ENCODE measurements at regions of chr7 and their contacts with region 1.

Region 1: DNA sequence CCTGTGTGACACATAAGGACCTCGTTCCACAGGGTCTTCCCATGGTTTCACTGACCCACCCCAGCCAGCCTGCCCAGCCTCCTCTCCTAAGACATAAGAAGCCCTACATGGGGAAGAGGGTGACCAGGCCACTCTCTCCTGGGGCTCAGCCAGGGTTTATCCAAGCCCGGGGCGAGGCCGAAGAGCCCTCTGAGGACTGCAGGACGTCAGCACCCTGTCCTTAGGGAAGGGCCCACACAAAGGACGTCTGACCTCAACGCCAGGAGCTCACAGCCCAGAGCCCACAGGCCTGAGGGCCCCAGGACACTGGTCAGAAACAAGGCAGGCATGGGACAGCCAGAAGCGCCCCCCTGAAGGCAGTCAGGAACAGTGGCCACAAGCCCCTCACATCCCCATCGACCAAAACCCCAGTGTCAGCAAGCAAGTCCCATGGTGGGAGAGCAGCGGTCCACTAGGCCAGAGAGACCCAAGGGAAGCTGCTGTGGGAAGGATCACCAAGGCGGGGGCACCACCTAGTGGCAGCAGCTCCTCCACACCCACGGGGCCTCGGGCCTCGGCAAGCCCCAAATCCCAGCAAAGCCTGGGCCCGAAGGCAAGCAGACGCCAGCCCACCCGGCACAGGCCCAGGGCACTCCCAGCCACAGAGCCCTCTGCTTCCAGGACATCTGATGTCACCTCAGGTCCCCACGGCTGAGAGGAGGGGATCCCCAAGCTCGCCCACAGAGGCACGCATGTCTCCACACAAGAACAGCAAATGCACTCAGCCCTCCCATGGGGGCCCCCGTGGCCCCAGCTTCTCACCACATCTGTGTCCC is 23.4 kb downstream of the MAD1L1 start:
- DNase-seq: peak; percentile 95
- H3K4me3 ChIP-seq: no peak overlapping the region
- H3K27ac ChIP-seq: peak overlapping the region in 1 of 2 experiments; percentile 2; a peak in 1 of 4 replicates
- H3K4me1 ChIP-seq: peaks cover 0 to 20% of the 10 kb centered on the region in 2 experiments; a peak in 2 of 4 replicates
- H3K27me3 ChIP-seq: no peaks in the 10 kb centered on the region
- CTCF ChIP-seq: peak; percentile 90
- EP300 ChIP-seq: no peak
- RAD21 ChIP-seq: peak; percentile 95

Region 2: DNA sequence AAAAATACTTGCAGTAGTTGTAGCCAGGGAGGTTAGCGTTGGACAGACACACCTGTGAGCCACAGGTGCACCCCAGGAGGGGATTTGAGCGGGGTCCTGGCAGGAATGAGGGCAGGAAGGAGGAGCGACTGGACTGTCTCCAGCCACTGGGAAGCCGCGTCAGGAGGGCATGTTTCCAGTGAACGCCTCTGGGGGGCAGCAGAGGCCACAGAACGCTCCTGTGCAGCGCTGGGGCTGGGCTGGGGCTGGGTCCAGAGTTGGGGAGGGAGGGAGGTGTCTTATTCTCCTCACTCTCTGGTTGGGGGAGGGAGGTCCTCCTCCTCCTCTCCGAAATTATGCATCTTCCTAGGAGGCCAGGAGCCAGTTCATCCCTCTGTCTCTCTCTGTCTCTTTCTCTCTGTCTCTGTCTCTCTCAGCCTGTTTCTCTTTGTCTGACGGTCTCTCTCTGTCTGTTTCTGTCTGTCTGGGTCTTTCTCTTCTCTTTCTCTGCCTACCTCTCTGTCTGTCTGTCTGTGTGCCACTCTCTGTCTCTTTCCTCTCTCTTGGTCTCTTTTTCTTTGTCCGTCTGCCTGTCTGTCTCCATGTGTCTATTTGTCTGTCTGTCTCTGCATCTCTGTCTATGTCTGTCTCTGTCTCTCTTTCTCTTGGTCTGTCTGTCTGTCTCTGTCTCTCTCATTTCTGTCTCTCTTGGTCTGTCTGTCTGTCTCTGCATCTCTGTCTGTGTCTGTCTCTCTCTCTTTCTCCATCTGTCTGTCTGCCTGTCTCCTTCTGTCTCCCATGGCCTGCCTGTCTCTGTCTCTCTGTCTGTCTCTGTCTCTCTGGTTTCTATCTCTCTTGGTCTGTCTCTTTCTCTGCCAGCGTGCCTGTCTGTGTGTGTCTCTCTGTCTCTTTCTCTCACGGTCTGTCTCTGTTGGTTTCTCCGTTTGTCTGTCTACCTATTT is 629.6 kb before region 1 on chr7:
- CTCF ChIA-PET with region 1: interaction called, 12 read pairs
- POLR2A ChIA-PET with region 1: no interaction called
- DNase-seq: peak; percentile 93
- H3K4me3 ChIP-seq: no peak overlapping the region
- H3K27ac ChIP-seq: peak overlapping the region in 1 of 2 experiments; percentile 31; a peak in 1 of 4 replicates
- H3K4me1 ChIP-seq: peaks cover 0 to 12% of the 10 kb centered on the region in 2 experiments; a peak in 1 of 4 replicates
- H3K27me3 ChIP-seq: no peaks in the 10 kb centered on the region
- CTCF ChIP-seq: peak; percentile 95
- EP300 ChIP-seq: no peak
- RAD21 ChIP-seq: peak; percentile 98

Region 3: GRCh38 chr7:1587125-1587592 is 622.2 kb before region 1 on chr7:
- CTCF ChIA-PET with region 1: interaction called, 10 read pairs
- POLR2A ChIA-PET with region 1: no interaction called
- DNase-seq: peak; percentile 97
- H3K4me3 ChIP-seq: no peak overlapping the region; a peak in 1 of 4 replicates
- H3K27ac ChIP-seq: peak overlapping the region in 1 of 2 experiments; percentile 95; a peak in 2 of 4 replicates
- H3K4me1 ChIP-seq: peaks cover 0 to 57% of the 10 kb centered on the region in 2 experiments; a peak in 1 of 4 replicates
- H3K27me3 ChIP-seq: peaks cover 18% of the 10 kb centered on the region; the same call in 1 of the 2 replicates
- CTCF ChIP-seq: no peak
- EP300 ChIP-seq: peak in 1 of 2 experiments; percentile 90; a peak in 2 of 4 replicates
- RAD21 ChIP-seq: peak; percentile 26

Region 4: DNA sequence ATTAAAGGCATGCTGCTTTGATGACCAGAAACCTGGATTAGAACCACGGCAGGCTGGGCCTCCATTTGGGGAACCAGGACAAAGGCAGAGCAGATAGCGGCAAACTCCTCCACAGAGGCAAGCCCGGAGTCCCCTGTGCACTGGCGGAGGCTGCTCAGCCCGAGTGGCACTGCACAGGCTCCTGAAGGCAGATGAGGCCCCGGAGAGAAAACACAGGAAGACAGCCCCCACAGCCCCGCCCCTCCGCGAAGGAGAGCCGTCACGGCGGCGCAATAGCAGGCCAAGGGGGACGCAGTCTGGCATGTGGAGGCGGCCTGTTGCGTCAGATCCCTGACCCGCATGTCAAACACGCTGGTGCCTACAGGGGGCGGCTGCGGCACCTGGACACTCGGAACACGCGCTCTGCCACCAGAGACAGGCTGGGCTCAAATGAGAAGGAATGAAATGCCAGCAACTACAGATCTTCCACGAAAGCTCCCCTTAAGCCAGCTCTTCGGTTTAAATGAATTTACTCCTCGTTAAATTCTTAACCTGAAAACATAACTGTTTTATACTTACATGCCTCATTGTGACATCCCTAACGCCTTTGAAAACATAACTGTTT is 105.1 kb before region 1 on chr7:
- CTCF ChIA-PET with region 1: interaction called, 23 read pairs
- POLR2A ChIA-PET with region 1: no interaction called
- DNase-seq: peak; percentile 99
- H3K4me3 ChIP-seq: no peak overlapping the region
- H3K27ac ChIP-seq: peak overlapping the region; percentile 32 to 91
- H3K4me1 ChIP-seq: peaks cover 23 to 82% of the 10 kb centered on the region in 2 experiments
- H3K27me3 ChIP-seq: no peaks in the 10 kb centered on the region
- CTCF ChIP-seq: peak; percentile 75
- EP300 ChIP-seq: 0 out of 4 replicates have a peak, but pooled peaks of 1 of the 2 experiments have one; percentile 30
- RAD21 ChIP-seq: peak; percentile 77

Region 5: GRCh38 chr7:2157468-2158279 is 51.7 kb before region 1 on chr7:
- CTCF ChIA-PET with region 1: interaction called, 12 read pairs
- POLR2A ChIA-PET with region 1: no interaction called
- DNase-seq: no peak
- H3K4me3 ChIP-seq: no peak overlapping the region
- H3K27ac ChIP-seq: no peak overlapping the region
- H3K4me1 ChIP-seq: peaks cover 0 to under 1% of the 10 kb centered on the region in 2 experiments; a peak in 3 of 4 replicates
- H3K27me3 ChIP-seq: no peaks in the 10 kb centered on the region
- CTCF ChIP-seq: no peak
- EP300 ChIP-seq: no peak
- RAD21 ChIP-seq: no peak

Region 6: GRCh38 chr7:2195400-2196246 is 13.7 kb before region 1 on chr7:
- CTCF ChIA-PET with region 1: interaction called, 24 read pairs
- POLR2A ChIA-PET with region 1: no interaction called
- DNase-seq: no peak
- H3K4me3 ChIP-seq: peak overlapping the region in 1 of 2 experiments; percentile 7; a peak in 1 of 4 replicates
- H3K27ac ChIP-seq: no peak overlapping the region
- H3K4me1 ChIP-seq: peaks cover 0 to 15% of the 10 kb centered on the region in 2 experiments; a peak in 1 of 4 replicates
- H3K27me3 ChIP-seq: no peaks in the 10 kb centered on the region
- CTCF ChIP-seq: no peak
- EP300 ChIP-seq: no peak
- RAD21 ChIP-seq: no peak

Region 7: DNA sequence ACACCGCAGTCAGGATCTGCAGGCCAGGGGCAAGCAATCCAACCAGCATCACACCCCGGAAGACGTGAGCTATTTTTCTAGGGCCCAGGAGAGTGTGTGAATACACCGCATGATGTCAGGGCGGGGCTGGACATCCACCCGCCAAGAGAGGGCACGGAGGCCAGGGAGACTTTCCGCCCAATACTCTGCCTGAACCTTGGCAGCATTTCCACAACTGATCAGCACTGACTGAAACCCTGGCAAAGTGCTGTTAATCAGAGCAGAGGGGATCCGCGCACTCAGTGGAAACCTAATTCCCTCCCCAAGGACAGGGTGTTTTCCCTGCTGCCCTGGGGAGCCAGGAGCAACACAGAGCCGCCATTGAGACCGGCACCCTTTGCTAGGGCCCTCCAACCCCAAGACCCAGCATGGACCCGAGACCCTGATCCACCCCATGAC is 15.2 kb after region 1 on chr7:
- CTCF ChIA-PET with region 1: interaction called, 10 read pairs
- POLR2A ChIA-PET with region 1: no interaction called
- DNase-seq: no peak
- H3K4me3 ChIP-seq: no peak overlapping the region
- H3K27ac ChIP-seq: no peak overlapping the region
- H3K4me1 ChIP-seq: peaks cover 0 to 11% of the 10 kb centered on the region in 2 experiments; a peak in 1 of 4 replicates
- H3K27me3 ChIP-seq: no peaks in the 10 kb centered on the region
- CTCF ChIP-seq: no peak
- EP300 ChIP-seq: no peak
- RAD21 ChIP-seq: no peak

Region 8: GRCh38 chr7:2299131-2299829 is 89.9 kb after region 1 on chr7:
- CTCF ChIA-PET with region 1: no interaction called
- POLR2A ChIA-PET with region 1: no interaction called
- DNase-seq: no peak
- H3K4me3 ChIP-seq: no peak overlapping the region
- H3K27ac ChIP-seq: no peak overlapping the region
- H3K4me1 ChIP-seq: no peaks in the 10 kb centered on the region
- H3K27me3 ChIP-seq: no peaks in the 10 kb centered on the region
- CTCF ChIP-seq: no peak
- EP300 ChIP-seq: no peak
- RAD21 ChIP-seq: no peak

Measured in SK-N-SH (cell line).